Right cardiac atrium (tissue), 5 donors: ENCODE measurements at regions of chr7 and their contacts with region 1.

Region 1: GRCh38 chr7:37201003-37201875 is 247.4 kb downstream of the ELMO1 start:
- DNase-seq: peak; percentile 75 to 90 (median 85)
- ATAC-seq: peak; percentile 85 to 89
- H3K4me3 ChIP-seq: no peak overlapping the region
- H3K27ac ChIP-seq: peak overlapping the region; percentile 94
- H3K4me1 ChIP-seq: peaks cover 4% of the 10 kb centered on the region
- H3K27me3 ChIP-seq: no peaks in the 10 kb centered on the region

Region 2: GRCh38 chr7:36487756-36488336 is 713.4 kb before region 1 on chr7:
- intact Hi-C with region 1: loop called in 2 of 4 experiments (anchors 5 kb)
- DNase-seq: no peak
- ATAC-seq: no peak
- H3K4me3 ChIP-seq: no peak overlapping the region
- H3K27ac ChIP-seq: no peak overlapping the region
- H3K4me1 ChIP-seq: no peaks in the 10 kb centered on the region
- H3K27me3 ChIP-seq: no peaks in the 10 kb centered on the region

Region 3: DNA sequence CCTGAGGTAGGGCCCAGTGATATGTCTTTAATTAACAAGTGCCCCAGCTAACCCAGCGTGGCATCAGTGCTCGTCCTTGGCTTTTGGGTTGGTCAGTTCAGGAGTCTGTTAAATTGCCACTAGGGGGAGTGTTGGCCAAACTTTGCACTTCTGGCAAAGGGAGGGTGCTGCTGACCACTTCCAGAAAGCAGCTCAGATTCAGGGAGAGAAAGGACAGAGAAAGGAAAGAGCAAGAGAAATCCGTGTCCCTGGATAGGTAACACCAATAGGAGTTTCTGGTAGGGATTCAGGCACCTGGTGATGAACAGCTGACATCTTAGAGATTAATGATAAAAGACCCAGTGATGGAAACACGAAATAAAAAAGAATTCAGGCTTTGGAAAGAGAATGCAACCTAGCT is 233.9 kb before region 1 on chr7:
- intact Hi-C with region 1: loop called in 2 of 4 experiments (anchors 5 kb)
- DNase-seq: peak; percentile 53 to 70 (median 60)
- ATAC-seq: peak; percentile 94 to 95
- H3K4me3 ChIP-seq: no peak overlapping the region
- H3K27ac ChIP-seq: no peak overlapping the region
- H3K4me1 ChIP-seq: no peaks in the 10 kb centered on the region
- H3K27me3 ChIP-seq: no peaks in the 10 kb centered on the region